Activated B cell treated with CpG ODN at 0.5 μM for 24 hours (primary cell): ENCODE measurements at regions of chr2 and their contacts with region 1.

Region 1: DNA sequence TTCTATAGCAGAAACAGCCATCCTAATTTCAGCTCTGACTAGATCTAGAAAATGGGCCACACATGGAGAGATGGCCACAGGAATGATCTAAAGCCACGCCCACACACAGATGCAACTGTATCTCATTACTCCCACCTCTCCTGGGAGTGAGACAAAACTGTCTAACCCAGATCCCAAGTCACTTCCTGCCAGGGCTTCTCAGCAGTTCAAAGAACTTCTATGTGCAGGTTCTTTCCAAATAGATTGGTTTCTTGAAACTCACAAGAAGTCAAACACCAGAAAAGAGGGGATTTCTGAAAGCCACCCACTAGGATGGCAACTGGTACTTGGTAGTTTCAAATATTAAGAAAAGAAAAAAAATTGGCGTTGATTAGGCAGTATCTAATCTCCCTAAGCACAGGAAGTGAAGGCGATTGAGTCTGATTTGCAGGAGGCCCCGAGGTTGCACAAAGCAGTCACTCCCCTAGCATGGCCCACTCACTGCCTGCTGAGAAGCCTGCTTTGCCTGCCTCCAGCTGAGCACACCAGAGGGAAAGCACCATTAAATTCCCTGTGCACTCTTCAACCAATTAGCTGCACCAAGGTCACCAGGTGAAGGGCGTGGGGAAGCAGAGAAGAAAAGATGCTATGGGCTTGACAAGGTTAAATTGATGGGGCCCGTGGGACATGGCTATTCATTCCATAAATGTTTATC is 51.1 kb downstream of the PAPOLG start:
- DNase-seq: peak; percentile 34
- ATAC-seq: peak; percentile 93
- H3K4me3 Mint-ChIP-seq: peak overlapping the region; percentile 59
- H3K27ac Mint-ChIP-seq: peak overlapping the region; percentile 93
- H3K4me1 Mint-ChIP-seq: peaks cover 54% of the 10 kb centered on the region
- H3K27me3 Mint-ChIP-seq: no peaks in the 10 kb centered on the region
- CTCF ChIP-seq: no peak

Region 2: DNA sequence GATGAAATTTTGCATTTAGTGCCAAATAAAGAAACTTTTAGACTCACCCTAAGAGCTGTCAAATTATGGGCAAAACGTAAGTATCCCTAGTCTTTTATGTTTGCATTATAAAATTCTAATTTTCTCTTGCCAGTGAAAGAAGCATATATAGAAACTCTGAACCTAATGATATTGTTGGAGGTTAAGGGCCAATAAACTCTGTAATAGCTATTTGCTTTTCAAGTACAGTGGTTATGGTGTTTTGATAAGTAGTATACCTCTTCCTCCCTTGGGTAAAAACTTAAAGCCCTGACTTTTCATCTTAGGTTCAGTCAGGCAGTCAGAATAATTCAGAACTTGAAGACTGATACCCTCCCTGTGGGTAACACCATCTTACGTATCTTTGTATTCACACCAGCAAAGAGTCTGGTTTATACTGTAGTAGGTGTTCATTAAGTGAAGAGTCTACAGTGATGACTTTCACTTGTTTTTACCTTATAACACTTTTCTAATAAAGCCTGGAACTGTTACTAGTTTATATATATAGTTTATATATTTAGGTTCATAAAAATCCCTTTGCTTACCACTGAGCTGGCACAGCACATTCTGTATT is 32.0 kb before region 1 on chr2:
- CTCF ChIA-PET with region 1: no interaction called
- POLR2A ChIA-PET with region 1: no interaction called
- intact Hi-C with region 1: no loop called
- DNase-seq: no peak
- ATAC-seq: no peak
- H3K4me3 Mint-ChIP-seq: no peak overlapping the region
- H3K27ac Mint-ChIP-seq: no peak overlapping the region
- H3K4me1 Mint-ChIP-seq: no peaks in the 10 kb centered on the region
- H3K27me3 Mint-ChIP-seq: no peaks in the 10 kb centered on the region
- CTCF ChIP-seq: no peak

Region 3: DNA sequence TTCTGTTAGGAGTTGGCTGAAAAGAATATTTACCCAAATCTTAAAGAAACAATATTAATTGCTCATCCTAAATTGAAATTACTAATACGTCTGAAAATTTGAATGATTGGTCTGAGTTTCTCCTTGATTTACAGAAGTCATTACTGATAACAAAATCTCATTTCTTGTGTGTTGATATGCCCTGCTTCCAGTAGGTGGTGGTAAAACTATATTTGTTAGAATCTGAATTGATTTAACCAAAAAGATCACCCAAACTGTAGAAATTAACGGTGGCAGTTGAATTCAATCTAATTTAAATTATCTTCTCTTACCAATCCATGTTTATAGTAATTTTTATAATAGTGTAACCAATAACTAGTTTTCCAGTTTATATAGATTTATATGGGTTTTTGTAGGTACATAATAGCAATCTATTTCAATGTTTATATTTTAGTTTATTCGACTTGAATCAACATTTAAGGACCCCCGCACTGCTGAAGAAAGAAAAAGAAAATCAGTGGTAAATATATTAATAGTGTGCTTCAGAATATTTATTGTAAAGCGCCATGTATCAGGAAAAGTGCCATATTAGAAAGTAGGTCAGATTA is 12.8 kb before region 1 on chr2:
- CTCF ChIA-PET with region 1: no interaction called
- POLR2A ChIA-PET with region 1: interaction called, 10 read pairs
- intact Hi-C with region 1: loop called (anchors 1 kb)
- DNase-seq: no peak
- ATAC-seq: peak; percentile 46
- H3K4me3 Mint-ChIP-seq: no peak overlapping the region
- H3K27ac Mint-ChIP-seq: no peak overlapping the region
- H3K4me1 Mint-ChIP-seq: peaks cover 31% of the 10 kb centered on the region
- H3K27me3 Mint-ChIP-seq: no peaks in the 10 kb centered on the region
- CTCF ChIP-seq: peak; percentile 46

Region 4: GRCh38 chr2:60834270-60834962 is 27.3 kb after region 1 on chr2:
- CTCF ChIA-PET with region 1: interaction called, 7 read pairs
- POLR2A ChIA-PET with region 1: interaction called, 17 read pairs
- intact Hi-C with region 1: loop called (anchors 1 kb)
- DNase-seq: no peak
- ATAC-seq: peak; percentile 71
- H3K4me3 Mint-ChIP-seq: peak overlapping the region; percentile 44
- H3K27ac Mint-ChIP-seq: peak overlapping the region; percentile 92
- H3K4me1 Mint-ChIP-seq: peaks cover 75% of the 10 kb centered on the region
- H3K27me3 Mint-ChIP-seq: no peaks in the 10 kb centered on the region
- CTCF ChIP-seq: no peak

Region 5: GRCh38 chr2:60852282-60852860 is 45.2 kb after region 1 on chr2:
- CTCF ChIA-PET with region 1: no interaction called
- POLR2A ChIA-PET with region 1: no interaction called
- intact Hi-C with region 1: no loop called
- DNase-seq: no peak
- ATAC-seq: no peak
- H3K4me3 Mint-ChIP-seq: no peak overlapping the region
- H3K27ac Mint-ChIP-seq: no peak overlapping the region
- H3K4me1 Mint-ChIP-seq: peaks cover 16% of the 10 kb centered on the region
- H3K27me3 Mint-ChIP-seq: no peaks in the 10 kb centered on the region
- CTCF ChIP-seq: no peak

Region 6: DNA sequence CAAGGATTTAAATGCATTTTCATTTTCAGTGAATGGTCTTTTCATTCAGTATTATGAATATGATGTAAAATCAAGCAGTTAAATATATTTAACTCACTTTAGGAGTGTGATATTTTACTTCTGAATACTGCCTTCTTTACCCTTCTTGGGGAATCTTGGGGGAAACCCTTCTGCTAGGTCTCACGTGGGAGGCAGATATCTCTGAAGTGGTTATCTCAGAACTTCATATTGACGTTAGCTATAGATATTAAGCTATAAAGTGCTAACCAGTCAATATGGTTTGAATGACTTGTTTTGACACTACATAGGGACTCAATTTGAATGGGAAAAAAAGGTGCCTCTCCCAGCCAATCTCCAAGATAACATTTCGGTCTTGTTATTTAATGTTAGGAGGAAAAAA is 84.0 kb after region 1 on chr2:
- CTCF ChIA-PET with region 1: interaction called, 6 read pairs
- POLR2A ChIA-PET with region 1: interaction called, 5 read pairs
- intact Hi-C with region 1: loop called (anchors 1 kb)
- DNase-seq: no peak
- ATAC-seq: peak; percentile 72
- H3K4me3 Mint-ChIP-seq: peak overlapping the region; percentile 69
- H3K27ac Mint-ChIP-seq: peak overlapping the region; percentile 80
- H3K4me1 Mint-ChIP-seq: peaks cover 60% of the 10 kb centered on the region
- H3K27me3 Mint-ChIP-seq: no peaks in the 10 kb centered on the region
- CTCF ChIP-seq: no peak

Region 7: DNA sequence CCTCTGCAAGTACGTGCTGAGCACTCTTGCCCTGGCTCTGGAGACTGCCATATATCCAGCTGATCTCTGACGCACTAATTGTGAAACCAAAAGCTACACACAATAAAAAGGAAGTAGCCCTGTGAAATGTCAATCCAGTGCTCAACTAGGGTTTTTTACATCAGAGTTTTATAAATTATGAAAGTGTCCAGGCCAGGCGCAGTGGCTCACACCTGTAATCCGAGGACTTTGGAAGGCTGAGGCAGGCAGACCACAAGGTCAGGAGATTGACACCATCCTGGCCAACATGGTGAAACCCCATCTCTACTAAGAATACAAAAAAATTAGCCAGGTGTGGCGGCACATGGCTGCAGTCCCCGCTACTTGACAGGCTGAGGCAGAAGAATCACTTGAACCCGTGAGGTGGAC is 185.9 kb after region 1 on chr2:
- CTCF ChIA-PET with region 1: interaction called, 39 read pairs
- POLR2A ChIA-PET with region 1: interaction called, 29 read pairs
- intact Hi-C with region 1: loop called (anchors 1 kb)
- DNase-seq: peak; percentile 41
- ATAC-seq: peak; percentile 94
- H3K4me3 Mint-ChIP-seq: peak overlapping the region; percentile 66
- H3K27ac Mint-ChIP-seq: peak overlapping the region; percentile 98
- H3K4me1 Mint-ChIP-seq: peaks cover 75% of the 10 kb centered on the region
- H3K27me3 Mint-ChIP-seq: no peaks in the 10 kb centered on the region
- CTCF ChIP-seq: no peak